BJ (cell line): ENCODE measurements at regions of chr15 and their contacts with region 1.

Region 1: DNA sequence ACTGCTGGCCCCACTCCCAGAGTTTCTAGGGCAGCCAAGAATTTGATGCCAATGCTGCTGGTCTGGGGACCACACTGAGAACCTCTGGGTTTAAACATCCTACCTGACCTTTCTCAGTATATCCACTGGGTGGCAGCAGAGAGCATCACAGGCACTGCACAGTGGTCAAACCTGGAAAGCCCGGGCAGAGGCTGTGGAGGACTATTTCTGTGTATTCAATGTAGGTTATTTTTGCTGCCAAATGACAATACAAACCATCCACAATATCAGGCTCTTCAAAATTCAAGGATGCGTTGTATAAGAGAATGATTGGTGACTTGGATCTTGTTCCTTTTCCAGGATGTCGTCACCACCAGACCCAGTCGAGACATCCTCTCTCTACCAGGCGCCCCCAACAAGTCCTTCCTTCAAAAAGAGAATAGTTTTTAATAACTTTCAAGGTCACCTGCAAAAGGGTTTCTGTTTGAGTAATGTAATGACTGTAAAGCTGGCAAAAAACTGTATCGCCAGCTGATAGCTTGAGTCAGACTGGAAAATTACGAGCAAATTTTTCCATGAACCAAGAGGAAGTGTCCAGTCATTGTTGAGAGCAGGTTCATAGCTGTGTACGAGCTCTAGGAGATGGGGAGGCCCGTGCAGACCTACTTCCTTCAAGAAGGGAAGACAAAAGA is 30.5 kb upstream of the MYZAP start:
- DNase-seq: peak; percentile 49
- H3K4me3 ChIP-seq: no peak overlapping the region
- H3K27me3 ChIP-seq: no peaks in the 10 kb centered on the region
- CTCF ChIP-seq: peak; percentile 92

Region 2: GRCh38 chr15:57583720-57584119 is 22.5 kb after region 1 on chr15:
- CTCF ChIA-PET with region 1: interaction called, 13 read pairs
- POLR2A ChIA-PET with region 1: no interaction called
- DNase-seq: no peak
- H3K4me3 ChIP-seq: no peak overlapping the region
- H3K27me3 ChIP-seq: peaks cover 12% of the 10 kb centered on the region
- CTCF ChIP-seq: no peak

Region 3: DNA sequence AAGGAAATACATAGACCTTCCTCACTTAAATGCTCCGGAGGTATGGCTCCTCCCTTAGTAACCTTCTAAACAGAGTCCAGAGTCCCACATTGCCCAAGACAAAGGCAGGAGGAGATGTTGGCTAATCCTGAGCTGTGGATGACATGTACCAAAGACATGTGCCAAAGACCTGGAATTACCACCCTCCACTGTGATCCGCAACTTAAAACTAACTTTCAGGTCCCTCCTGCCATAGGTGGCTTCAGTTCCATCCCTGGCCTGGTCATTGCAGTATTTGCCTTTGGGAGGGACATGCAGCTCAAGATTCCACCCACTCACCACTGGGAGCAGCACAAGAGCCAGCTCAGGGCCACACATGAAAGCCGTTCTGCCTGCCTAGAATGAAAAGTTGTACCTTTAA is 58.6 kb after region 1 on chr15:
- CTCF ChIA-PET with region 1: interaction called, 16 read pairs
- POLR2A ChIA-PET with region 1: no interaction called
- DNase-seq: no peak
- H3K4me3 ChIP-seq: no peak overlapping the region
- H3K27me3 ChIP-seq: no peaks in the 10 kb centered on the region
- CTCF ChIP-seq: 0 out of 2 replicates have a peak, but pooled peaks have one; percentile 11

Region 4: GRCh38 chr15:57706405-57707209 is 145.4 kb after region 1 on chr15 and contains the start of gene POLR2M:
- CTCF ChIA-PET with region 1: interaction called, 15 read pairs
- POLR2A ChIA-PET with region 1: no interaction called
- DNase-seq: peak; percentile 89
- H3K4me3 ChIP-seq: peak within 1 kb of the TSS; percentile 82
- H3K27me3 ChIP-seq: no peaks in the 10 kb centered on the region
- CTCF ChIP-seq: no peak
- polyA plus RNA-seq, gene POLR2M: 87.2 and 126 TPM in 2 replicates

Region 5: DNA sequence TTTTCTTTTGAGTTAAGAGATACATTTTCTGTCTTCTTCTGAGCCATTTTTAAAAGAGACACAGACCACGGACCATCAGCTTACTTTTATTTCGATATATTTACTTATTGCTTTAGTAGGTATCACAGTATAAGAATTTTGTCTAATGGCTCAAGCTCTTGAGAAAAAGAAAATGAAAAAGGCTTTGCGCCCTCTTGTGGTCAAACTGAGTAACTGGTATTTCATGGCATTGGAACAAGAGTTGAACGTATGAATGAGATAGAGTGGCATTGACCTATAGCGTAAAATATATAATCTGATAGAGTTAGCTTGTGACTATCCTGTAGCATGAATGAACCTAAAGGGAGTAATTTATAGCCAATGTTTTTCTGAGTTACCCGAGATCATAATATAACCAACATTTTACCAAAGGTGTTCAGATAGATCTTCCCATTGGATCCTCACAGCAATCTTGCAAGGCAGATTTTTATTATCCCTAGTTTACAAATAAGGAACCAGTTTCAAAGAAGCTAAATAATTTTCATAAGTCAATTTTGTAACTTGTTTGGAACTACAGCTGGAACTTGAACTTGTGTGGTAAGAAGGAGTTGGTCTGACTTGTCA is 300.0 kb after region 1 on chr15:
- CTCF ChIA-PET with region 1: interaction called, 11 read pairs
- POLR2A ChIA-PET with region 1: no interaction called
- DNase-seq: no peak
- H3K4me3 ChIP-seq: no peak overlapping the region
- H3K27me3 ChIP-seq: no peaks in the 10 kb centered on the region
- CTCF ChIP-seq: peak; percentile 70